OCI-LY7 (cell line): ENCODE measurements at regions of chr3 and their contacts with region 1.

Region 1: GRCh38 chr3:33787328-33788009 is 11.0 kb upstream of the PDCD6IP start:
- DNase-seq: peak; percentile 76
- H3K4me3 ChIP-seq: no peak overlapping the region
- H3K27ac ChIP-seq: no peak overlapping the region
- H3K4me1 ChIP-seq: peaks cover 5% of the 10 kb centered on the region
- CTCF ChIP-seq: peak; percentile 90

Region 2: GRCh38 chr3:32276279-32276847 is 1511.1 kb before region 1 on chr3:
- CTCF ChIA-PET with region 1: no interaction called
- POLR2A ChIA-PET with region 1: no interaction called
- intact Hi-C with region 1: no loop called
- DNase-seq: no peak
- H3K4me3 ChIP-seq: no peak overlapping the region
- H3K27ac ChIP-seq: no peak overlapping the region
- H3K4me1 ChIP-seq: peaks cover 7% of the 10 kb centered on the region
- CTCF ChIP-seq: no peak

Region 3: GRCh38 chr3:33131331-33132018 is 656.0 kb before region 1 on chr3:
- CTCF ChIA-PET with region 1: interaction called, 4 read pairs
- POLR2A ChIA-PET with region 1: no interaction called
- intact Hi-C with region 1: loop called (anchors 2 kb)
- DNase-seq: peak; percentile 68
- H3K4me3 ChIP-seq: no peak overlapping the region
- H3K27ac ChIP-seq: no peak overlapping the region
- H3K4me1 ChIP-seq: no peaks in the 10 kb centered on the region
- CTCF ChIP-seq: peak; percentile 93

Region 4: DNA sequence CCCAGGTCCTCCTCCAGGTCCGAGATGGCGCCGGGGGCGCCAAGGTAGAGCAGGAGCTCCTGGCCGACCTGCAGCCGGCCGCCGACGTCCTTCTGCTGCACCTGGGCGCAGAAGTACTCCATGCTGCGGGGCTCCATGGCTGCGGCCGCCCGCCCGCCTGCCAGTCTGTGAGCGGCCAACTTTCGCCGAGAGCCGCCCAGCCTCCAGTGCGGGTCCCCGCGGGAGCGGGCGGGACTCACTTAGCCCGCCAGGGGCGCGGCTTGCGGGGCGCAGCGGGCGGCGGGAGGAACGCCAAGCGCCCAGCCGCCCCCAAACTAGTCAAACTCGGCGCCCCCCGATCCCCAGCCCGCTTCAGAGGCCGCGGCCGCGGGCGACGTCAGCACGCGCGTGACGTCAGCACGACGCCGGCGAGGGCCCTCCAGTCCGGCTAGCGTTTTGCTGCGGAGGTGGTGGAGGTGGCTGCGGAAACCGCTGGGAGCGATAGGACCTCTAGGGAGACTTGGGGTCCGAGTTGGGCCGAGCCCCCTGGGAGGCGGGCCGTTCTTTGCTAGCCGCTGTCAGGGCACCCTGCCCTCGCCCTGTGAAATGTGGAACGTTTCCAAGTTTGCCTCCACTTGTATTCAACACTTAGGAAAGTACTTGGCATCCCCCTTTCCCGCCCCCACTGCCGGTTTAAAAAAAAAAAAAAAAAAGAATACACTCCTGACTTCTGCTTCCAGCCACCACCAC is 69.4 kb before region 1 on chr3 and contains the start of gene CLASP2:
- CTCF ChIA-PET with region 1: no interaction called
- POLR2A ChIA-PET with region 1: no interaction called
- intact Hi-C with region 1: loop called (anchors 5 kb)
- DNase-seq: peak; percentile 92
- H3K4me3 ChIP-seq: peak within 1 kb of the TSS; percentile 94
- H3K27ac ChIP-seq: peak within 1 kb of the TSS; percentile 69
- H3K4me1 ChIP-seq: peaks cover 27% of the 10 kb centered on the region
- CTCF ChIP-seq: no peak
- total RNA-seq, gene CLASP2: 99.1 and 108 TPM in 2 replicates

Region 5: DNA sequence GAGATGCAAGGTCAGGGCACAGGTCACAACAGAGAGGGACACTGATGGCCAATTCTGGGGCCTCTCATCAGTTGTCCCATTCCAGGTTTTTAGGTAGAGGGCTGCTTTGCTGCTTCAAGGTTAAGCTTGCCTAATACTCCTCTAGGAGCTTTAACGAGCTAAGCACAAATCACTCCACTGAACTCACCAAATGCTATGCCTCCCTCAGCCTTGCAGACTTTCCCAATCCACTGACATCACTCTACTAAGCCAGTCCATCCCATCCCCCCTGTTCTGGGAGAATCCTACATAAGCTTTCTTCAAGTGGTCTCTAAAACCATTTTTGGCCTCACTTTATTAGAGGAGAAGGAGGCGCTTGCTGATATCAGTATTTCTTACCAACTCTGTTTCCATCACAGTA is 13.8 kb before region 1 on chr3:
- CTCF ChIA-PET with region 1: interaction called, 7 read pairs
- POLR2A ChIA-PET with region 1: interaction called, 10 read pairs
- intact Hi-C with region 1: no loop called
- DNase-seq: no peak
- H3K4me3 ChIP-seq: no peak overlapping the region
- H3K27ac ChIP-seq: no peak overlapping the region
- H3K4me1 ChIP-seq: no peaks in the 10 kb centered on the region
- CTCF ChIP-seq: no peak

Region 6: GRCh38 chr3:33798411-33799201 is 11.1 kb after region 1 on chr3 and contains the start of gene PDCD6IP:
- CTCF ChIA-PET with region 1: interaction called, 7 read pairs
- POLR2A ChIA-PET with region 1: interaction called, 10 read pairs
- intact Hi-C with region 1: no loop called
- DNase-seq: peak; percentile 92
- H3K4me3 ChIP-seq: peak within 1 kb of the TSS; percentile 84
- H3K27ac ChIP-seq: peak within 1 kb of the TSS; percentile 56
- H3K4me1 ChIP-seq: peaks cover 32% of the 10 kb centered on the region
- CTCF ChIP-seq: peak; percentile 34; the same call in 1 of the 2 replicates
- total RNA-seq, gene PDCD6IP: 75.5 and 126 TPM in 2 replicates

Region 7: DNA sequence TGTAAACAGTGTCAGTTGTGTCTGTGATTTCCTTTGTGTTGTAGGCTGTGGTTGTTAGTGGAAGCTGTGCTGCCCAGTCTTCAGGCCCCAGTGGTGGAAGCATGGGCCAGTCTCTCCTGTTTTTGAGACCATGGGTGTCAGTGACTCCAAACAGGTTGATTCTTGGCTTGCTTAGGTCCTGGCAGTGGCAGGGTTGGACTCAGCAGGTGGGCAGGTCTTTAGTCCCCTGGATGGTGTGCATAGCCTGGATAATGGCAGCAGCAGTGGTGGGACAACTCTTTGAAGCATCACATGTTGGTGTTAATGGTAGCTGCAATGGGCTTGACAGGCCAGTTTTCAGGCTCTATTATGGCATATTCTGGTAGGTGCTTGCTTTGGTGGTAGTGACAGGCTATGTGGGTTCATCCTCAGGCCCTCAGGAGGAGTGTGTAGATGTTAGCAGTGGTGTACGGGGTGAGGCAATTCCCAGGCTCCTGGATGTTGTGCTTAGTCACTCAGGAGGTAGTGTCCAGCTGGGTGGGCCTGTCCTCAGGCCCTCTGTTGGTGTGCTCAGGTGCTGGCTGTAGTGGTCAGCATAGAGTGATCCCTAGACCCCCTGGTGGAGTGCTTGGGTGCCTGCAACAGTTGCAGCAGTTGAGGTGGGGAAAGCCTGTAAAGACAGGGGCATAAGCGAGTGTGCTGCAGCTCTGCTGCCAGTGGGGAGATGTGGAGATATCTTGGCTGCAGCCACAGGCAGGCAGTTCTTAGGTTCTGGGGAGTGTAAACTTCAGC is 607.7 kb after region 1 on chr3:
- CTCF ChIA-PET with region 1: no interaction called
- POLR2A ChIA-PET with region 1: no interaction called
- intact Hi-C with region 1: no loop called
- DNase-seq: no peak
- H3K4me3 ChIP-seq: no peak overlapping the region
- H3K27ac ChIP-seq: no peak overlapping the region
- H3K4me1 ChIP-seq: no peaks in the 10 kb centered on the region
- CTCF ChIP-seq: no peak; the same call in 1 of the 2 replicates